Esophagus muscularis mucosa (tissue), 4 donors: ENCODE measurements at regions of chr1 and their contacts with region 1.

Region 1: DNA sequence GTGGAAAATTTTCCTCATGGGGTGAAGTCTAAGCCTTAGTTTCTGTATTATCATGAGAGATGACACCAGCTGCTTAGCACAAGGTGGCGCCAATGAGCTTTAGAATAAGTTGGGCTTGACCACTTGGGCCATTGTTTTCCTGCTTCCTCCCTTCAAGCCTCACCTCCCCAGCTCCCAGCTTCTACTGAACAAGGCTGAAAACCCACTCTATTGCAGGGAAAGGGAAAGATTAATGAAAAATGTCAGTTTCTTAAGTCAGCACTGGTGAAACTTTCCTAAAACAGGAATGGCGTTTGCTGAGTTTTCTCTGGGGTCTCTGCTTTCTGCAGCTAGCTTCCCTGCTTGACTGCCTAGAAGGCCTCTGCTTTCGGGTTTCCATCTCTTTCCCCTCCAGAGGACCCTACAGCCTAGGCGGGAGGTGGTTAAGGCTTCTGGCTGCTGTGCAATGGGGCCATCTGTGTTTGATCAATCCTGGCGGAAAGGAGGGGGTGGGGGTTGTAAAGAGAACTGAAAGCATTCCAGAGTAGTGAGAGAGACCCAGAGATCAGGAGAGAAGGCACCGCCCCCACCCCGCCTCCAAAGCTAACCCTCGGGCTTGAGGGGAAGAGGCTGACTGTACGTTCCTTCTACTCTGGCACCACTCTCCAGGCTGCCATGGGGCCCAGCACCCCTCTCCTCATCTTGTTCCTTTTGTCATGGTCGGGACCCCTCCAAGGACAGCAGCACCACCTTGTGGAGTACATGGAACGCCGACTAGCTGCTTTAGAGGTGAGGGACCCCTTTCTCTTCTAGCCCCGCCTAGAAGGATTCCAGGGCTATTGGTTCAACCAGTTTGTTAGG is at the start of gene OLFML3:
- DNase-seq: peak; percentile 97
- H3K4me3 ChIP-seq: peak within 1 kb of the TSS; percentile 46 to 54 (median 48)
- H3K27ac ChIP-seq: peak within 1 kb of the TSS; percentile 77 to 84 (median 80)
- H3K4me1 ChIP-seq: peaks cover 43 to 92% (median 85%) of the 10 kb centered on the region in 4 donors
- H3K27me3 ChIP-seq: no peaks in the 10 kb centered on the region
- CTCF ChIP-seq: peak; percentile 70 to 72 (median 71)
- EP300 ChIP-seq: no peak
- POLR2A ChIP-seq: no peak
- total RNA-seq, gene OLFML3: 57.7 to 109 (median 67.4) TPM

Region 2: GRCh38 chr1:113811888-113812660 is 167.0 kb before region 1 on chr1 and contains the start of gene RSBN1:
- intact Hi-C with region 1: no loop called
- DNase-seq: peak; percentile 99
- H3K4me3 ChIP-seq: peak within 1 kb of the TSS; percentile 85 to 93 (median 91)
- H3K27ac ChIP-seq: peak within 1 kb of the TSS; percentile 97 to 98 (median 98)
- H3K4me1 ChIP-seq: peaks cover 17 to 37% (median 32%) of the 10 kb centered on the region in 4 donors
- H3K27me3 ChIP-seq: no peaks in the 10 kb centered on the region
- CTCF ChIP-seq: peak in 1 of 3 experiments; percentile 31
- EP300 ChIP-seq: no peak
- POLR2A ChIP-seq: peak; percentile 81
- total RNA-seq, gene RSBN1: 15.8 to 24.3 (median 20.1) TPM

Region 3: DNA sequence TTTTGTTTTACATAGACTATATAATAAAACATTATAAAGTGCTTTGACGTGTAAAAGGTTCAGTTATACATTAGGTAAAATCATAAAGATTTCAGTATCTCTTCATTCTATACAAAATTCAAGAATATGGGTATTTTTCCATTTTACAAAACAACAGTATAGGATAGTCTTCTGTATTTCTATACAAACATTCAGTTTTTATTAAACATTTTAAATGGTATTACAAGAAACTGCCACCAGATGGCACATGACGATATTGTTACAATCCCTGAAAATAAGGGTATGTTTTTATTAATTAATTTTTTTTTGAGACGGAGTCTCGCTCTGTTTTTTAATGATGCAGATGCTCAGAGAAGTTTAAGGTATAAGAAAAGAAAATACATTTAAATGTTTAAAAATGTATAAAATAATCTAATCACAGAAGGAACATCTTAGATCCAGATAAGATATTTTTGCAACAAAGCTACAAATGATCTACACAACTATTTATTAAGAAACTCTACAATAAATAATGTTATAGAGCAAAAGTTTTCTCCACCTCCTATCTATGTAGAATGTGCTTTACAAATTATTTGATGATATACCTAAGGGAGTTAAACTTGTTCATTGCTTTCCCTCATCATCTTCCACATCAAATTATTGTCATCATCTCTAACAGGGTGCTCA is 143.3 kb before region 1 on chr1:
- intact Hi-C with region 1: loop called (anchors 10 kb)
- DNase-seq: no peak
- H3K4me3 ChIP-seq: no peak overlapping the region
- H3K27ac ChIP-seq: no peak overlapping the region
- H3K4me1 ChIP-seq: no peaks in the 10 kb centered on the region
- H3K27me3 ChIP-seq: no peaks in the 10 kb centered on the region
- CTCF ChIP-seq: peak; percentile 54 to 65 (median 63)
- EP300 ChIP-seq: no peak
- POLR2A ChIP-seq: no peak

Region 4: DNA sequence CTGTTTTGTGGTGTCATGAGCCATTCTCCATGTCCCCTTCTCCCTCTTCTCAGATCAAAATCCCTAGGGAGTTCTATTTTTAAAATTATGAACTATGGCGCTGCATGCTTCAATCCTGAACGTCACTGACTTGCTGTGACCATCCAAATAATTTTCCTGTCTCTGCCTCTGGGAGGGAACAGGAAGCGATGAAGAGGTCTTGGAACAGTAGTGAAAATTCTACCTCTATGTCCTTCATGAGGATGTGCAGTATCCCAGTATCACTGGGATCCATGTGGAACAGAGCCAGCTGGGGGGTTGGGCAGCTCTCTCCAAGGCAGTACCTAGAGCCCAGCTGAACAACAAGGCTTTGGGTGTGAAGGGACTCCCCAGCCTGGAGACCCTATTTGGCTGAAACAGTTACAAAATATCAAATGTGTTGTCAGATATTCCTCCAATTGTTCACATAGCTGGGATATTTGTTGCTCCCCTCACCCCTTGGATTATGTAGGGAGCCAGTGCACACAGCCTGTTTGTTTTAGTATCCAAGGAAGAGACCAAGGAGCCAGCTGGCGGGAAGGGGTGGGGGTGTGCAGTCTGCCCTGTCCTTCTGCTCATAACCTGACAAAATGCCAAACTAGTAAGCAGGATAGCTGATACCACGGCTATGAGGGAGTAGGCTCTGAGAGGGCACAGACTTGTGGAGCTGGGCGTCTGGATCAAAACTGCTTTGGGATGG is 66.3 kb before region 1 on chr1:
- intact Hi-C with region 1: loop called (anchors 5 kb)
- DNase-seq: no peak
- H3K4me3 ChIP-seq: peak overlapping the region in 3 of 4 donors; percentile 10 to 11 (median 11)
- H3K27ac ChIP-seq: peak overlapping the region; percentile 67 to 82 (median 75)
- H3K4me1 ChIP-seq: peaks cover 12 to 20% (median 18%) of the 10 kb centered on the region in 4 donors
- H3K27me3 ChIP-seq: no peaks in the 10 kb centered on the region
- CTCF ChIP-seq: no peak
- EP300 ChIP-seq: no peak
- POLR2A ChIP-seq: no peak

Region 5: DNA sequence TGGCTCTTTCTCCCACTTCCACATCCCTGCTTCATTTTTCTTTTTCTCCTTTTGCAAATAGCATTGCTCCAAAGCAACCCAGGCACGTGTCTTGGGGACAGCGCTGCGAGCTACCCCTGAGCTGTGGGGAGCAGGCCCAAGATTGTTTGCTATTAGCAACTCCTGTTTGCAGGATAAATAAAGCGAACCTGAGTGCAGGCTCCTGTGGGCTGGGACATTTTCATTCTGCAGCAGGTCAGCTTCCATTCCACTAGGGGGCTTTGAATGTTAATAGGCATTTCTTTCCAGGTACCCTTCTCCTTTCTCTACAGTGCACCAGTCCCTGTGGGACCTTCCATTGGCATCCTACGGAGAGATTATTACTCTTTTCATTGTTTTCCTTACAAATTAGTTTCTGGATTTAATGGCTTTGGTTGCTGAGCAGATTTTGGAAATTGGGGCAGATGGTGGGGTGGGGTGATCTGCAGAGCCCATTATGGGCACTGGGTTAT is 54.2 kb after region 1 on chr1:
- intact Hi-C with region 1: no loop called
- DNase-seq: no peak
- H3K4me3 ChIP-seq: no peak overlapping the region
- H3K27ac ChIP-seq: no peak overlapping the region
- H3K4me1 ChIP-seq: peaks cover 0 to 6% (median 2%) of the 10 kb centered on the region in 4 donors
- H3K27me3 ChIP-seq: no peaks in the 10 kb centered on the region
- CTCF ChIP-seq: peak in 2 of 3 experiments; percentile 18 to 42
- EP300 ChIP-seq: no peak
- POLR2A ChIP-seq: no peak

Region 6: DNA sequence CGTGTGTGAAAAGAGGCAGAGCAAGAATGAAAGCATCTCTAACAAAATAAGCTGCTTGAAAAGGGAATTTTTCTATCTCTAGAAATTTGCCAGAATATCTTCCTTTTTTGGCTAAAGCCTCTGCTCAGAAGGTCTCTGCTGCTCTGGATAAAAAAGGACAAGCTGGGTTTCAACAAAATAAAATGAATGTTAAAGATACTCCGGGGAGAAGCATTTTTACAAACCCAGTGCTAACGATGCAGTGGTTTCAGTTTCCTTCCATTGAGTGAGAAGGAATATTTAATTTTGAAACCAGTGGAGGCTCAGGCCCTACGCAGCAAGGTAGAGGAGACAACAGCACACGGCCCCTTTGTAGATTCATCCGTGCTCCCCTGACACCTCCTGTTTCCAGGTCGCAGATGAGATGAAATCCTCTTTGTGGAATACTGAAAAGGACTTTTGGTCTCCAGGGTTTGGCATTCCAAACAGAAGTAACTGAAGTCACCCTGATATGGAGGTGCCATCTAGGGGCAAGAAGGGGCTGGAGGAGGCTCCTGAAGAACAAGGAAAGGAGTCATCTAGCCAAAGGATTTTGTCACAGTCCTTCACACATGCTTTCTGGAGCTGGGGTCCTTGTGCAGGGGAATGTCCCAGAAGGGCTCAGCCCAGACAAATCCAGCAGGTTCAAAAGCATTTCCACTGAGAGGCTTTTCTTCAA is 240.2 kb after region 1 on chr1:
- intact Hi-C with region 1: loop called (anchors 5 kb)
- DNase-seq: no peak
- H3K4me3 ChIP-seq: peak overlapping the region; percentile 4 to 33 (median 18)
- H3K27ac ChIP-seq: peak overlapping the region in 1 of 4 donors; percentile 23
- H3K4me1 ChIP-seq: peaks cover 0 to 20% (median 17%) of the 10 kb centered on the region in 4 donors
- H3K27me3 ChIP-seq: no peaks in the 10 kb centered on the region
- CTCF ChIP-seq: peak; percentile 14 to 22 (median 19)
- EP300 ChIP-seq: no peak
- POLR2A ChIP-seq: no peak

Region 7: GRCh38 chr1:114282751-114283403 is 303.8 kb after region 1 on chr1:
- intact Hi-C with region 1: loop called (anchors 2 kb)
- DNase-seq: peak; percentile 94
- H3K4me3 ChIP-seq: no peak overlapping the region
- H3K27ac ChIP-seq: no peak overlapping the region
- H3K4me1 ChIP-seq: no peaks in the 10 kb centered on the region
- H3K27me3 ChIP-seq: no peaks in the 10 kb centered on the region
- CTCF ChIP-seq: peak; percentile 81 to 90 (median 86)
- EP300 ChIP-seq: no peak
- POLR2A ChIP-seq: no peak